ENCODE measurements at regions of chr11 and their contacts with region 1.

Region 1: GRCh38 chr11:120172054-120172911 is 34.4 kb upstream of the TRIM29 start:
- DNase-seq: peak; percentile 71 to 82 (median 79)
- H3K4me3 ChIP-seq: no peak overlapping the region
- H3K27ac ChIP-seq: no peak overlapping the region
- H3K4me1 ChIP-seq: no peaks in the 10 kb centered on the region
- H3K27me3 ChIP-seq: no peaks in the 10 kb centered on the region
- CTCF ChIP-seq: peak; percentile 82 to 91 (median 86)
- EP300 ChIP-seq: no peak
- POLR2A ChIP-seq: no peak

Region 2: GRCh38 chr11:120043328-120043945 is 128.8 kb before region 1 on chr11:
- intact Hi-C with region 1: no loop called
- DNase-seq: no peak
- H3K4me3 ChIP-seq: no peak overlapping the region
- H3K27ac ChIP-seq: no peak overlapping the region
- H3K4me1 ChIP-seq: no peaks in the 10 kb centered on the region
- H3K27me3 ChIP-seq: no peaks in the 10 kb centered on the region
- CTCF ChIP-seq: no peak
- EP300 ChIP-seq: no peak
- POLR2A ChIP-seq: no peak

Region 3: GRCh38 chr11:120229451-120230424 is 57.5 kb after region 1 on chr11:
- intact Hi-C with region 1: loop called (anchors 2 to 5 kb)
- DNase-seq: peak in 1 of 5 donors; percentile 60
- H3K4me3 ChIP-seq: no peak overlapping the region
- H3K27ac ChIP-seq: peak overlapping the region in 1 of 2 donors; percentile 52
- H3K4me1 ChIP-seq: peaks cover 8% of the 10 kb centered on the region
- H3K27me3 ChIP-seq: no peaks in the 10 kb centered on the region
- CTCF ChIP-seq: peak; percentile 52 to 70 (median 67)
- EP300 ChIP-seq: no peak
- POLR2A ChIP-seq: no peak

Region 4: DNA sequence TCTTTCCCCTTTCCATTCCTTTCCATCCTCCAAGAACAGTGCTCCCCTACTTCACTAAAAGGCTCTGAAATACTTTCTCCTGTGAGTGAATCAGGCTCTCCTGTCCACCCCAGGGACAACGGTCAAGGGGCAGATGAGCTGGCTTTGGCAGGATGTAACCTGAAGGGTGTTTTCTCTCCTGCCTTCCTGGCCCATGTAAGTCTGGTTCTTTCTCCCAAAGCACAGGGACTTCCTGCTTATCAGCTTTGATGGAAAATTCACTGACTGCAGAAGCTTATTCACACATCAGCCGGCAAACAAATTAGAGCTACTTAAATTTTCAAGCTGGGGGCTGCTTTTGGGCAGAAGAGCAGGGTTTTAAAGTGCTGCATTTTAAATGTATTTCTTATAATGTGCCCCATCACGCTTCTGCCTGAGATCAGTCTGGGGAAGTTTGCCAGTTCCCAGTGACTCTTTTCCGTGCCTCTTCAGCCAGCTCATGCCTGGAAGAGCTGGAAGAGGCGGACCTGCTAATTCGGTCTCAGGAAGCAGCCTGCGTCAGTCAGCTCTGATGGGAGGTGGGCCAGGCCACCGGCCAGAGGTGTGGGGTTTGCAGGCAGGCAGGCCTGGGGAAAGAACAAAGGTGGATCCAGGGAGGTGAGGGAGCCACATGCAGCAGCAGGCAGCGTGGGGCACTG is 711.3 kb after region 1 on chr11:
- intact Hi-C with region 1: no loop called
- DNase-seq: peak in 2 of 5 donors; percentile 27 to 40
- H3K4me3 ChIP-seq: no peak overlapping the region
- H3K27ac ChIP-seq: no peak overlapping the region
- H3K4me1 ChIP-seq: peaks cover 2% of the 10 kb centered on the region
- H3K27me3 ChIP-seq: no peaks in the 10 kb centered on the region
- CTCF ChIP-seq: no peak
- EP300 ChIP-seq: no peak
- POLR2A ChIP-seq: no peak